ENCODE measurements at regions of chr12 and their contacts with region 1.

Region 1: GRCh38 chr12:53625946-53626701 is at the start of gene ATF7:
- DNase-seq: peak; percentile 99
- ATAC-seq: peak; percentile 96
- H3K4me3 Mint-ChIP-seq: peak within 1 kb of the TSS; percentile 95
- H3K27ac Mint-ChIP-seq: peak within 1 kb of the TSS; percentile 84
- H3K4me1 Mint-ChIP-seq: peaks cover 35% of the 10 kb centered on the region
- H3K27me3 Mint-ChIP-seq: no peaks in the 10 kb centered on the region
- total RNA-seq, gene ATF7: 23.0 to 28.1 TPM

Region 2: GRCh38 chr12:53379389-53380103 is 246.6 kb before region 1 on chr12:
- CTCF ChIA-PET with region 1: no interaction called
- POLR2A ChIA-PET with region 1: no interaction called
- intact Hi-C with region 1: loop called in 1 of 2 experiments (anchors 1 kb)
- DNase-seq: peak; percentile 96
- ATAC-seq: peak; percentile 82
- H3K4me3 Mint-ChIP-seq: no peak overlapping the region
- H3K27ac Mint-ChIP-seq: no peak overlapping the region
- H3K4me1 Mint-ChIP-seq: peaks cover 39% of the 10 kb centered on the region
- H3K27me3 Mint-ChIP-seq: no peaks in the 10 kb centered on the region

Region 3: DNA sequence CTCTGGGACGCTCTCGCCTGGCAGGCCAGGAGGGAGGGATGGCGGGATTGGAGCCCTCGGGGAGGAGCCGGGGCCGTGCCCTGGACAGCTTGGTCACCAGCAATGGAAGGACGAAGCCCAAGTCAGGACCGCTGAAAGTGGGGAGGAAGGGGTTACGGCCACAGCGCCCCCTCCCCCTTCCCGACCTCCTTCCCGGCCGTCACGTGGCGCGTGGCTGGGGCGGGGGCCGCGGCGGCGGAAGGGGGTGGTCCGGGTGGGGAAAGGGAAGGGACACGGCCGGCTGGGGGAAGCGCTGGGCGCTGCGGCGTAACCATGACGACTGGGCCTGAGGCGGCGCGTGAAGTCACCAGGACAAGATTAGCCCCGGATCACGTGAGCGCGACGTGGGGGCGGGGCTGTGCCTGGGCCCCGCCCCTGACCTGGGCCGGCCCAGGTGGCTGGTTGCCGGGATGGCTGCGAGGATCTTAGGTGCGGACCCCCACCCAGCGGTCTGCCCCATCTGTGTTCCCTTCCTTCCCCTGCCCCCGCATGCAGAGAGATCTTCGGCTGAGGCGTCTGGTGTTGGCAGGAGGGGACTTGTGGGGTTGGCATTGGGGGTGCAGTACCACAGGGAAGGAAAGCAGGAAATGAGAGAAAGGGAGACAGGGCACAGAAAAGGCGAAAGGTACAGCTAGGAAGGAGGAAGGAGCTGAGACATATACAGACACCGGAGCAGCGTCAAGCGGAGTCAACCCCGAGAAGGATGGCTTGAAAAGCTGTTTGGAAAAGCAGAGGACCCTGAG is 133.1 kb before region 1 on chr12:
- CTCF ChIA-PET with region 1: interaction called, 3 read pairs
- POLR2A ChIA-PET with region 1: no interaction called
- intact Hi-C with region 1: loop called in 1 of 2 experiments (anchors 2 kb)
- DNase-seq: peak; percentile 93
- ATAC-seq: peak; percentile 94
- H3K4me3 Mint-ChIP-seq: peak overlapping the region; percentile 80
- H3K27ac Mint-ChIP-seq: peak overlapping the region; percentile 88
- H3K4me1 Mint-ChIP-seq: peaks cover 20% of the 10 kb centered on the region
- H3K27me3 Mint-ChIP-seq: no peaks in the 10 kb centered on the region

Region 4: GRCh38 chr12:53543539-53543938 is 82.6 kb before region 1 on chr12:
- CTCF ChIA-PET with region 1: interaction called, 7 read pairs
- POLR2A ChIA-PET with region 1: interaction called, 6 read pairs
- intact Hi-C with region 1: loop called (anchors 1 kb)
- DNase-seq: peak; percentile 79
- ATAC-seq: peak; percentile 99
- H3K4me3 Mint-ChIP-seq: no peak overlapping the region
- H3K27ac Mint-ChIP-seq: peak overlapping the region; percentile 78
- H3K4me1 Mint-ChIP-seq: peaks cover 20% of the 10 kb centered on the region
- H3K27me3 Mint-ChIP-seq: no peaks in the 10 kb centered on the region

Region 5: GRCh38 chr12:53575502-53576253 is 50.4 kb before region 1 on chr12:
- CTCF ChIA-PET with region 1: interaction called, 3 read pairs
- POLR2A ChIA-PET with region 1: no interaction called
- intact Hi-C with region 1: loop called in 1 of 2 experiments (anchors 1 kb)
- DNase-seq: peak; percentile 23
- ATAC-seq: peak; percentile 78
- H3K4me3 Mint-ChIP-seq: no peak overlapping the region
- H3K27ac Mint-ChIP-seq: no peak overlapping the region
- H3K4me1 Mint-ChIP-seq: peaks cover 45% of the 10 kb centered on the region
- H3K27me3 Mint-ChIP-seq: no peaks in the 10 kb centered on the region

Region 6: GRCh38 chr12:53675651-53676453 is 49.7 kb after region 1 on chr12 and contains the start of gene ATP5MC2:
- CTCF ChIA-PET with region 1: interaction called, 11 read pairs
- POLR2A ChIA-PET with region 1: no interaction called
- intact Hi-C with region 1: loop called (anchors 1 kb)
- DNase-seq: peak; percentile 99
- ATAC-seq: peak; percentile 96
- H3K4me3 Mint-ChIP-seq: peak within 1 kb of the TSS; percentile 93
- H3K27ac Mint-ChIP-seq: peak within 1 kb of the TSS; percentile 95
- H3K4me1 Mint-ChIP-seq: peaks cover 29% of the 10 kb centered on the region
- H3K27me3 Mint-ChIP-seq: peaks cover 20% of the 10 kb centered on the region
- total RNA-seq, gene ATP5MC2: 356 to 415 TPM

Region 7: DNA sequence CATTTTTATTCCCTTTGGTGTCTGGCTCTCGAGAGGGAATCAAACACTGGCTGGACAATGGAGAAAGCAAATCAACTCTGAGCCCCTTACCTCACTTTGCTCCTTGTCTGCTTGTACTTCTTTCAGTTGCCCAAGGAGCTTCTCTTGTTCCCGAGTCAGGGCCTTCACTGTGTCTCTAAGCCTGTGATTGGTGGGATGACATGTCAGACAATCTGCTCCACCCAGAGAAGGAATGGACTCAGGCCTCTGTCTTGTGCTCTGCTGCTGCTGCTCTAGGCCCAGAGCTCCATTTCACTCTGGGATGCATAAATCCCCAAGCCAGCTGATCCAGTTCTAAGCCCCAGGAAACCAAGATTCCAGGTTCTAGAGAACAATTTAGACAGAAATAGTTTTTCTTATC is 93.5 kb after region 1 on chr12:
- CTCF ChIA-PET with region 1: no interaction called
- POLR2A ChIA-PET with region 1: no interaction called
- intact Hi-C with region 1: no loop called
- DNase-seq: no peak
- ATAC-seq: no peak
- H3K4me3 Mint-ChIP-seq: no peak overlapping the region
- H3K27ac Mint-ChIP-seq: no peak overlapping the region
- H3K4me1 Mint-ChIP-seq: peaks cover 3% of the 10 kb centered on the region
- H3K27me3 Mint-ChIP-seq: no peaks in the 10 kb centered on the region

Region 8: DNA sequence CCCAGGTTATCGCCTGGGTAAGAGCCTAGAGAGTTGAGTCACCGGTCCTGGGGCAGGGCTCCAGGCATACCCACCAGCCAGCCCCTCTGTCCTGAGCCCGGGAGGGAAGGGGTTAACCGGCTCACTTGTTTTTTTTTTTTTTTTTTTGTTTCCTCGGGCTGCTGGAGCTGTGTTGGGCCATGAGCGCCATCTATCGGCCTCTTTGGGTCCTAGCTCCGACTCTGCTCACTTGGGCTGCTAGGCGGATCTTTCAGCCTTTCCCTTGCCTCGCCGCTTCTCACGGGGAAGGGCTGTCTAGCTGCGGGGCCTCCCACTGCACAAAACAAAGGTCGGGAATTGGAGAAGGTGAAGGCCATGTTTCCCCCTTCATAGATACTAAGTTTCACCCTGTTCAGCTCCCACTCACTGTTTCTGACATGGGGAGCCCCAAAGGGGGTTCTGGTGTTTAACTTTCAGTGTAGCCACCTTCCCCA is 565.5 kb after region 1 on chr12:
- CTCF ChIA-PET with region 1: no interaction called
- POLR2A ChIA-PET with region 1: no interaction called
- intact Hi-C with region 1: loop called in 1 of 2 experiments (anchors 2 kb)
- DNase-seq: peak; percentile 87
- ATAC-seq: peak; percentile 60
- H3K4me3 Mint-ChIP-seq: no peak overlapping the region
- H3K27ac Mint-ChIP-seq: no peak overlapping the region
- H3K4me1 Mint-ChIP-seq: peaks cover 17% of the 10 kb centered on the region
- H3K27me3 Mint-ChIP-seq: peaks cover 35% of the 10 kb centered on the region

Measured in activated CD4-positive, alpha-beta T cell treated with anti-CD3 and anti-CD28 coated beads for 36 hours (primary cell).